Activated naive CD4-positive, alpha-beta T cell treated with anti-CD3 and anti-CD28 coated beads for 36 hours (primary cell): ENCODE measurements at regions of chr14 and their contacts with region 1.

Region 1: GRCh38 chr14:50773632-50774541 is 57.1 kb downstream of the NIN start:
- DNase-seq: peak; percentile 61
- H3K4me3 Mint-ChIP-seq: no peak overlapping the region
- H3K27ac Mint-ChIP-seq: no peak overlapping the region
- H3K4me1 Mint-ChIP-seq: peaks cover 21% of the 10 kb centered on the region
- H3K27me3 Mint-ChIP-seq: no peaks in the 10 kb centered on the region

Region 2: GRCh38 chr14:50542941-50543418 is 230.9 kb before region 1 on chr14:
- CTCF ChIA-PET with region 1: interaction called, 25 read pairs
- intact Hi-C with region 1: loop called (anchors 1 kb)
- DNase-seq: peak; percentile 54
- H3K4me3 Mint-ChIP-seq: no peak overlapping the region
- H3K27ac Mint-ChIP-seq: no peak overlapping the region
- H3K4me1 Mint-ChIP-seq: peaks cover 8% of the 10 kb centered on the region
- H3K27me3 Mint-ChIP-seq: no peaks in the 10 kb centered on the region

Region 3: GRCh38 chr14:50619556-50620141 is 154.2 kb before region 1 on chr14:
- CTCF ChIA-PET with region 1: interaction called, 27 read pairs
- intact Hi-C with region 1: loop called (anchors 1 kb)
- DNase-seq: no peak
- H3K4me3 Mint-ChIP-seq: no peak overlapping the region
- H3K27ac Mint-ChIP-seq: no peak overlapping the region
- H3K4me1 Mint-ChIP-seq: no peaks in the 10 kb centered on the region
- H3K27me3 Mint-ChIP-seq: no peaks in the 10 kb centered on the region

Region 4: GRCh38 chr14:50756300-50756699 is 17.6 kb before region 1 on chr14:
- CTCF ChIA-PET with region 1: interaction called, 58 read pairs
- intact Hi-C with region 1: no loop called
- DNase-seq: no peak
- H3K4me3 Mint-ChIP-seq: no peak overlapping the region
- H3K27ac Mint-ChIP-seq: no peak overlapping the region
- H3K4me1 Mint-ChIP-seq: peaks cover 5% of the 10 kb centered on the region
- H3K27me3 Mint-ChIP-seq: no peaks in the 10 kb centered on the region

Region 5: DNA sequence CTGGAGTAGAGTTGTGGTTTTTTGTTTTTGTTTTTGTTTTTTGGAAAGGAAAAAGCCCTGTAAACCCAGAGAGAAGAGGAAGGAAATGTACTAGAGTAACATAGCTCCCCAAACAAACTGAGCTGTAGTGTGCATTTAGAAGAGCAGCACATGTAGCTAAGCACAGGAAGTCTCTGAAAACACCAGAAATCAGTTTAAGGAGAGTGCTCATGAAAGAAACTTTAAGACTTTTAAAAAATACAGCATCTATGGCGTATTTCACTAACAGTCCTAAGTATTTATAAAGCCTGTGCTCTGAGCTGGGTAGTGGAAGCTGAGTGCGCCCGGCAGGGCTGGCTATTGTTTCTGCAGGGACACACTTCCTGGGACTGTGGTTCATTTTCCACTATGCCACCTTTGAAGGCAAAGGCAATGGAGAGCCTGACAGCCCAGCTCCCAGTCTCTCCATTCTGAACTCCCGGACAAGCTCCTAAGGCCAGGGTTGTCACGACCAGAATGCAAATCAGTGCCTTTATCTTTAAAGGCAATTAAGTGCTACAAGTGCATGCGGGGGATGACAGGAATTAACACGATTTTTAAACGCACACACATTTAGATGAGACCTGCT is 11.7 kb after region 1 on chr14:
- CTCF ChIA-PET with region 1: interaction called, 19 read pairs
- intact Hi-C with region 1: no loop called
- DNase-seq: no peak
- H3K4me3 Mint-ChIP-seq: no peak overlapping the region
- H3K27ac Mint-ChIP-seq: no peak overlapping the region
- H3K4me1 Mint-ChIP-seq: peaks cover 66% of the 10 kb centered on the region
- H3K27me3 Mint-ChIP-seq: no peaks in the 10 kb centered on the region

Region 6: GRCh38 chr14:50943943-50944646 is 170.2 kb after region 1 on chr14 and contains the start of gene PYGL:
- CTCF ChIA-PET with region 1: no interaction called
- intact Hi-C with region 1: no loop called
- DNase-seq: peak; percentile 39
- H3K4me3 Mint-ChIP-seq: peak within 1 kb of the TSS; percentile 70
- H3K27ac Mint-ChIP-seq: no peak within 1 kb of the TSS
- H3K4me1 Mint-ChIP-seq: peaks cover 10% of the 10 kb centered on the region
- H3K27me3 Mint-ChIP-seq: peaks cover 32% of the 10 kb centered on the region
- total RNA-seq, gene PYGL: 0.37 to 0.38 TPM